ENCODE measurements at regions of chr10 and their contacts with region 1.

Region 1: DNA sequence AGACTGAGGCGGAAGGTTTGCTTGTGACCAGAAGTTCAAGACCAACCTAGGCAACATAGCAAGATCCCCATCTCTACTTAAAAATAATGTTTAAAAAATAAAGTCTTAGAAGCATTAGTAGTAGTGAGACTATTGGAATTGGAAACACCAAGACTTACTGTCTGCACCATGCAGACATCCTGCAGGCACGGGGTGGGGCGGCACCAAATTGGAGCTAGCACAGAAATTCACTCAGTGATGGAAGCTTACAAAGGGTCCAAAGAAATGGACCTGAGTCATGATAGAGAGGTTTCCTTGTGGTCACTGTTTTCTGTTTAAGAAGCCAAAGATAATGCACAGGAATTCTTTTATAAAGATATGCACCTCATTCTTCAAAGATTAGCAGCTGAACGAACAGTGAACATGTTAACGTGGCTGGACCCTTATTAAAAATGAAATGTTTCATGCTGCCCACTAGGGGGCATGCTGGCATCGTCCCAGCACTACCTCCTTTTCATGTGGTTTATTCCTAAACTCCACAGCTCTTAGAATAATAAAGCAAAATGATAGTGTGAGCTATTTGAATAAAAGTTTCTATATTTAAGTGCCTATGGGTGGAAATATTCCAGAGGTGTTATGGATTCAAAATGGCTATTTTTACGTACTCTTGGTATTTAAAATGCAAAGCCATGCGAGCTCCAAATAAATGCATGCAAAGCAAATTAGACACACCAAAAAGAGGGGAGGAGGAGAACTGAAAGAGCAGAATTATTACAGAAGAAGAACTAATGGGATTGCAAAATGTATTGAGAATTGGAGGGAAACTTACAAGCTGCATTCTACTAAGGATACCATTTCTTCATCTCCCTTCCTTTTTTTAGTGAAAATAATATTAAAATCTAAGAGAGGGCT is 28.6 kb downstream of the PDSS1 start:
- DNase-seq: peak; percentile 55
- H3K4me3 ChIP-seq: no peak overlapping the region
- H3K27ac ChIP-seq: no peak overlapping the region
- H3K27me3 ChIP-seq: no peaks in the 10 kb centered on the region
- CTCF ChIP-seq: peak; percentile 84

Region 2: GRCh38 chr10:26593896-26594295 is 132.2 kb before region 1 on chr10:
- CTCF ChIA-PET with region 1: no interaction called
- POLR2A ChIA-PET with region 1: no interaction called
- DNase-seq: no peak
- H3K4me3 ChIP-seq: no peak overlapping the region
- H3K27ac ChIP-seq: no peak overlapping the region
- H3K27me3 ChIP-seq: no peaks in the 10 kb centered on the region
- CTCF ChIP-seq: no peak

Region 3: GRCh38 chr10:26612151-26612915 is 113.7 kb before region 1 on chr10:
- CTCF ChIA-PET with region 1: no interaction called
- POLR2A ChIA-PET with region 1: no interaction called
- DNase-seq: no peak
- H3K4me3 ChIP-seq: no peak overlapping the region
- H3K27ac ChIP-seq: no peak overlapping the region
- H3K27me3 ChIP-seq: no peaks in the 10 kb centered on the region
- CTCF ChIP-seq: no peak

Region 4: GRCh38 chr10:26690731-26691475 is 35.2 kb before region 1 on chr10:
- CTCF ChIA-PET with region 1: interaction called, 10 read pairs
- POLR2A ChIA-PET with region 1: no interaction called
- DNase-seq: no peak
- H3K4me3 ChIP-seq: no peak overlapping the region
- H3K27ac ChIP-seq: no peak overlapping the region
- H3K27me3 ChIP-seq: no peaks in the 10 kb centered on the region
- CTCF ChIP-seq: no peak

Region 5: DNA sequence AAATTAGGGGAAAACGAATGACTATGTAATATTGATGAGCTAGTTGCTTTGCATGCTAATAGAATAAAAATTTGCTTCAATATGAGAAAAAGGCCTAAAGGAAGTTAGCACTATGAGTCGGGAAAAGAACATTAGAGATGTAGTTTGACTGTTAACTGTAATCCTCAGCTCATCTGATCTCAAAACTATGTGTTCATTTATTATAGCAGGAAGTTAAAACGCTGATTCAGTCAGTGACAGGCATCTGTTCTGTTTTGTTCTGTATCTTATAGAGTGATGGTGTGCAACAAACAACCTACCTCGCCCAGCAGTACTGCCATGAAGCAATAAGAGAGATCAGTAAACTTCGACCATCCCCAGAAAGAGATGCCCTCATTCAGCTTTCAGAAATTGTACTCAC is 20.0 kb after region 1 on chr10:
- CTCF ChIA-PET with region 1: interaction called, 11 read pairs
- POLR2A ChIA-PET with region 1: no interaction called
- DNase-seq: no peak
- H3K4me3 ChIP-seq: no peak overlapping the region
- H3K27ac ChIP-seq: no peak overlapping the region
- H3K27me3 ChIP-seq: no peaks in the 10 kb centered on the region
- CTCF ChIP-seq: no peak

Region 6: GRCh38 chr10:26790221-26790995 is 64.3 kb after region 1 on chr10:
- CTCF ChIA-PET with region 1: interaction called, 10 read pairs
- POLR2A ChIA-PET with region 1: no interaction called
- DNase-seq: no peak
- H3K4me3 ChIP-seq: no peak overlapping the region
- H3K27ac ChIP-seq: no peak overlapping the region
- H3K27me3 ChIP-seq: no peaks in the 10 kb centered on the region
- CTCF ChIP-seq: no peak

Region 7: DNA sequence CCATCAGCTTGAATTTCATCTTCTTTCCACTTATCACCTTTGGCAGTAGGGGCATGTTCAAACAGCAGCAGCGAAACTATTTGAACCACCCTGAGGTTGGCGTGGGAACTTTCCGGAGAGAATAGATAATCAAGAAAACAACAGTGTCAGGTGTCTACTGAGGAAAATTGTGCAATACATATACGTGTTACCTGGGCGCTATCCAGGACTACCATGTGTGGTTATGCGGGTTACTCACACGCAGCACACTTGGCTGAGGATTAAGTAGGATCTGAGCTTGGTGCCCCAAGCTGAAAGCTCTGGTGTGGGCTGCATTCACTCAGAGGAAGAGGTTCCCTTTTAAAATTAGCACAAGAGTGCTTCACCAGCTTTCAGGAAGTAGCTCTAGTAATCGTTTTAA is 143.4 kb after region 1 on chr10:
- CTCF ChIA-PET with region 1: interaction called, 10 read pairs
- POLR2A ChIA-PET with region 1: interaction called, 3 read pairs
- DNase-seq: no peak
- H3K4me3 ChIP-seq: no peak overlapping the region
- H3K27ac ChIP-seq: no peak overlapping the region
- H3K27me3 ChIP-seq: peaks cover 3% of the 10 kb centered on the region
- CTCF ChIP-seq: no peak

Region 8: DNA sequence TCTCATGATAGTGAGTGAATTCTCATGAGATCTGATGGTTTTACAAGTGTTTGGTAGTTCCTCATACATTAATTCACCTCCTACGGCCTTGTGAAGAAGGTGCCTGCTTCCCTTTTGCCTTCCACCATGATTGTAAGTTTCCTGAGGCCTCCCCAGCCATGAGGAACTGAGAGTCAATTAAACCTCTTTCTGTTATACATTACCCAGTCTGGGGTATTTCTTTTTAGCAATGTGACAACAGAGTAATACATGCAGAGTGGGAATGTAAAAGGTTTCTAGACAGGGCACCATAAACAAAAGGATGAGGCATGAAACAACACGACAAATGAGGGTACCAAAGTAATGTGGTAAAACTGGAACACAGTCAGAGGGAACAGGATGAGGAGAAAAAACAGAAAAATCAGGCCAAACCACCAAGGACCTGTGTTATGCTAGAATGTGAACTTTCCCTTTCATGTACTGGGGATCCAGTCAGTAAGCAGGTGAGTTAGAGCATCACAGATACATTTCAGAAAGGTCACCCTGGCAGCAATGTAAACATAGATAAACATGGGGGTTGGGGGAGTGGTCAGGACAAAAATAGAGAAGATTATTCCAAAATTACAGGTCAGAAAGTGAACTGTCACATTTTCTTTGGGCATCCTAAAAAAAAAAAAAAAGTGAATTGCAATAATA is 342.3 kb after region 1 on chr10:
- CTCF ChIA-PET with region 1: no interaction called
- POLR2A ChIA-PET with region 1: no interaction called
- DNase-seq: no peak
- H3K4me3 ChIP-seq: no peak overlapping the region
- H3K27ac ChIP-seq: no peak overlapping the region
- H3K27me3 ChIP-seq: no peaks in the 10 kb centered on the region
- CTCF ChIP-seq: no peak

Region 9: DNA sequence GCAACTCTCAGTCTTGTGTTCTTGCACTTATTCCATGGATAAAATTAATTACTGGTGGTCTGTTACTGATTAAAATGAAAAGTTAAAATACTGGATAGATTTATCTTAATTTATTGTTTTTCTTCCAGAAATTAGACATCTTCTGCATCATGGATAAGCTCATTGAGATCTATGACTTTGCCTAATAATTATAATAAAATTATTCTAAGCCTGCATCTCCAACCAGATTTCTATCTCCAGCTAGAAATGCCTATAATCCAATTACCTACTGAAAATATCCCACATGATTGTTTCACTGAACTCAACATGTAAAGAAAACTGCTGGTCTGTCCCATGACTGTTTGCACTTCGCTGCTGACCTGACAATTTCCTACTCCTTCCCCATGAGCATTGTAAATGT is 602.9 kb after region 1 on chr10:
- CTCF ChIA-PET with region 1: no interaction called
- POLR2A ChIA-PET with region 1: no interaction called
- DNase-seq: no peak
- H3K4me3 ChIP-seq: no peak overlapping the region
- H3K27ac ChIP-seq: no peak overlapping the region
- H3K27me3 ChIP-seq: no peaks in the 10 kb centered on the region
- CTCF ChIP-seq: no peak

Measured in AG04450 (cell line).